Aorta (tissue), 5 donors: ENCODE measurements at regions of chr4 and their contacts with region 1.

Region 1: DNA sequence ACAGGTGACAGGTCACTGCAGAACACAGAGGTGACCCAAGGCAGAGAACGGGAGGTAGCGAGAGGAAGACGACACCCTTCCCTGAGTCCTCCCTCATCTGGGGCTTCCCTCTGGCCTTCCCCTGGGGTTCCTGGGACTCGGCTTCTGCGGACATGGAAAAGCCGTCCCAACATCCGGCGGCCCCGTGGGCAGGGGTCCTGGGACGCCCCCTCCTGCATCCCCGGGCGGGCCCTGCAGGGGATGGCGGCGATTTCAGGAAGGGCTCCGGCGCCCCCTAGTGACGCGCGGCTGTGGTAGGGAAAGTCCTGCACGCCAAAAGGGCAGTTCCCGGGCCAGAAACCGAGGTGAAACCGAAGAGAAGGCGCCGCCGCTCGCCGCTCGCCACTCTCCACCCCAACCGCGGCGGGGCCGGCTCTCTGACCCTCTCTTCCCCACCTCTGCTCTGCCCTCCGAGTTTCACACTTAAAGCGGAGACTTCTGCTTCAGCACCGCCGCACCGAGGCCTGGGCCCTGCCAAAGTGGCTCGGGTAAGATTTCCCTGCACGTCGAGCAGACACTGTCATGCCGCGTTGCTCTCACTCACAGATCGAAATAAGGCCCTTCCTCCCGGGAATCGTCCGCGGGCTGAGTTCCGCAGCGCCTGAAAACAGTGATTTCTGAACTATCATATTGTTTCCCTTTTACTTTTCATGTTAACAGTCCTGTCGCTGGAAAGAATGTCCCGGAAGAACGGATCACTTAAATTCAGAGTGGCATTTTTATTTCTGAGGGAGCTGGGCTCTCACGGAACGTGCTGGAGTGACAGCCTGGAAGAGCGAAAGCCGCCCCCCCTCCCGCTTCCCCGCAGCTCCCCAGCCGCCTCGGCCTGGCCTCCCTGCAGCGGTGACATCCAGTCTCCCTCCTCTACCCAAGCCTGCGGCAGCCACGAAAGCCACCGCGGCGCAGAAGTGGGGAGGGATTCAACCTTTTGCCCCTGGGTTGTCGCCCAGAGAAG is 110.6 kb downstream of the DCTD start:
- DNase-seq: peak; percentile 77 to 92
- ATAC-seq: peak; percentile 87
- H3K4me3 ChIP-seq: peak overlapping the region in 1 of 2 donors; percentile 29
- H3K27ac ChIP-seq: no peak overlapping the region
- H3K4me1 ChIP-seq: no peaks in the 10 kb centered on the region
- H3K27me3 ChIP-seq: no peaks in the 10 kb centered on the region

Region 2: GRCh38 chr4:182478475-182478874 is 328.1 kb before region 1 on chr4:
- intact Hi-C with region 1: loop called (anchors 5 kb)
- DNase-seq: no peak
- ATAC-seq: no peak
- H3K4me3 ChIP-seq: no peak overlapping the region
- H3K27ac ChIP-seq: no peak overlapping the region
- H3K4me1 ChIP-seq: no peaks in the 10 kb centered on the region
- H3K27me3 ChIP-seq: no peaks in the 10 kb centered on the region

Region 3: GRCh38 chr4:182483685-182484084 is 322.9 kb before region 1 on chr4:
- intact Hi-C with region 1: loop called (anchors 5 kb)
- DNase-seq: no peak
- ATAC-seq: no peak
- H3K4me3 ChIP-seq: no peak overlapping the region
- H3K27ac ChIP-seq: no peak overlapping the region
- H3K4me1 ChIP-seq: no peaks in the 10 kb centered on the region
- H3K27me3 ChIP-seq: no peaks in the 10 kb centered on the region

Region 4: DNA sequence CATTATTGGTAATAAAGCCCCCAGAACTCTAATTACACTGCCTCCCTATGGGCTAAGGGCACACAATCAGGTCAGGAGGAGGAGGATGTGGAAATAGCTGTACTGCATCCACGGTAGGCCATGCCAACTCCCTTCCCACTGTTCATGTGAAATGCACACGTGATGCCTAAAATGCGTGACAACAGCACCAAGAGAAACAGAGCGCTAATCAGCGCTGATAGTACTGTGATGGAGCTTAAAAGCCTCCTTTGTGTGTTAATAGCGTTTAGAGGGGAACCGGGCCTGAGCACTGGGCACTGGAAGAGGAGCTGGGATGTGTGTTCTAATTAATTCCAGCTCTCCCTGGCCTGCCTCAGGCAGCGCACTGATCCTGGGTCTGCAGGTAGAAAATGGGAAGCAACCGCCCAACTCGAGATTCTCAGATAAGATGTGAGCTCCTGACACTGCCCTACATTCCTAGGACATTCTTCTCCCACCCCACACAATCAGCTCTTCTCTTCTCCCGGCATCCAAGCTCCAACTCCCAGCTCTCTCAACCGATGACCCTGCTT is 97.7 kb after region 1 on chr4:
- intact Hi-C with region 1: no loop called
- DNase-seq: no peak
- ATAC-seq: no peak
- H3K4me3 ChIP-seq: no peak overlapping the region
- H3K27ac ChIP-seq: no peak overlapping the region
- H3K4me1 ChIP-seq: no peaks in the 10 kb centered on the region
- H3K27me3 ChIP-seq: no peaks in the 10 kb centered on the region

Region 5: GRCh38 chr4:183130328-183131173 is 324.0 kb after region 1 on chr4:
- intact Hi-C with region 1: no loop called
- DNase-seq: no peak
- ATAC-seq: no peak
- H3K4me3 ChIP-seq: no peak overlapping the region
- H3K27ac ChIP-seq: no peak overlapping the region
- H3K4me1 ChIP-seq: peaks cover 0 to 3% of the 10 kb centered on the region in 2 donors
- H3K27me3 ChIP-seq: no peaks in the 10 kb centered on the region